HEK293 (cell line): ENCODE measurements at regions of chr6 and their contacts with region 1.

Region 1: DNA sequence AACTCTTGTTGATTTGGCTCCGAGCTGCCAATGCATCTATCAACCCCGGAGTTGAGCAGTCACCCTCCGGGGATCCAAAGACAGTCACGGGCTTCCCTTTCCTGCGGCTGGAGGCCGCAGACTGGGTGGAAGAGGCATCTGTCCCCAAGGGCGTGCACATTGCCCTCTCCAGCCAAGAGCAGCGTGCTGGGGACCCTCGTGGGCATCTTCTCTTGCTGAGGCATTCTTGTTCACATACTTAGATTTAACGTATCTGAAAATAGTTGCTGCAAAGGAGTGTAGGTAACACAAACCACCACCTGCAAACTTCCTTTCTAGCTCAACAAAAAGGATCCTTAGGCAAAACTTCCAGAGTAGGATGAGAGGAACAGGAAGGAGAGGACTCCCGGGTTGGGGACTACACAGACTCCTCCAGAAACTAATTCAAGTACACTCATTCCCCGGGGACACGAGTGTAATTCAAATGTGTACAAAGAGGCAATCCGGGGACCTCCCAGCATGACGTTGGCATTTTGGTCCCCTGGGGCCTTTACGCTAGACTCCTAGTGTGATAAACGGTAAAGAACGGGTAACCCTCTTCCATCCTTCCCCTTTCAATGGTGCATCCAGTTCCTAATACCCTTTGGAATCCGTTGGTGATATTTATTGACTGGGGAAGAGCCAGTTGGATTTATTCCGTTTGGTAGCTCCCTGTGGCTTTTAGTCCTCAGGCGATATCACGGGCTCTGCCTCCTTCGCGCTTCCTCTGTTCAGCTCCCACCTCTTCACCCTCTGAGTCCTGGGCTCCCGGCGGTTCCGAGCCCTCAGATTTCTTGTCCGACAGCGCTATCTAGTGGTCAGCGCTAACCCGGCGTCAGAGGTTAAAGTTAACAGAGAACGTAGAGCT is 2.7 kb upstream of the COL12A1 start:
- H3K4me3 ChIP-seq: no peak overlapping the region
- H3K27ac ChIP-seq: no peak overlapping the region
- H3K4me1 ChIP-seq: peaks cover 12% of the 10 kb centered on the region
- CTCF ChIP-seq: peak; percentile 78

Region 2: DNA sequence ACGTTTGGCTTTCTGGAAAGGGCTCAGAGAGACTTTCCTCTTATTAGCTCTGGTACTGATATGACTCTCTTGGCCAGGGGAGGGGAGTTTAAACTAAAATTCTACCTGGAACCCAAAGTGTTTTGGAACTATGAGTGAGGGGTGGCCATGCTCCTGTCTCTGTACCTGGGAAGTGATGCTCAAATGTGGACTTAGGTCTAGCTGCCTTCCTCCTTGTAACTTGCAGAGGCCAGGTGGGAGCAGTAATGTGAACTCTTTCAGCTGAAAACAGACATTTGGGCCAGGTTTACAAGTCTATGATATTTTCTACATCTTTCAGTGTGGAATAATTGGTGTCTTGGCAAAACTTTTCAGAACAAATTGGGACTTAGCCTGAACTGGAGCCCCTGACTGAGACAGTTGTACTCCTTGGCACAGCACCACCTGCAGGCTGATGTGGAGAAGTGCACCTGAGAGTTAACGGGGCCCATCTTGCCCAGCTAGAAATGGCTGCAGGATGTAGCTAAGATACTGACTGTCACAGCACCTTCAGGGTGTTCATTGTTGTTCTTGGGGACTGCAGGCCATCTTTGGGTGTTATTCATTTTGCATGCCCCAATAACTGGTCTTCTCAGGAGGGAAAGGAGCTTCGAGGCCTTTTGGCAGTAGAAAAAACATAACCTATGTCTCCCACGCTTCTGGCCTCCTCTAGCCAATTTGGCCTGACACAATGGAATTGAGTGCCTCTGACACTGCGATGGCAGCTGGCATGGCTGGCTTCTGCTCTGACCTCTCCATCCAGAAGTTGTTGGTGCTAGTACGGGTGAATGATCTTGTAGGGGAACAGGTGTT is 1475.5 kb before region 1 on chr6:
- CTCF ChIA-PET with region 1: interaction called, 92 read pairs
- POLR2A ChIA-PET with region 1: no interaction called
- H3K4me3 ChIP-seq: no peak overlapping the region
- H3K27ac ChIP-seq: no peak overlapping the region
- H3K4me1 ChIP-seq: no peaks in the 10 kb centered on the region
- CTCF ChIP-seq: peak; percentile 60

Region 3: GRCh38 chr6:73969971-73970970 is 1238.3 kb before region 1 on chr6:
- CTCF ChIA-PET with region 1: interaction called, 31 read pairs
- POLR2A ChIA-PET with region 1: no interaction called
- H3K4me3 ChIP-seq: no peak overlapping the region
- H3K27ac ChIP-seq: no peak overlapping the region
- H3K4me1 ChIP-seq: no peaks in the 10 kb centered on the region
- CTCF ChIP-seq: no peak

Region 4: GRCh38 chr6:74899416-74899815 is 309.1 kb before region 1 on chr6:
- CTCF ChIA-PET with region 1: interaction called, 16 read pairs
- POLR2A ChIA-PET with region 1: no interaction called
- H3K4me3 ChIP-seq: no peak overlapping the region
- H3K27ac ChIP-seq: no peak overlapping the region
- H3K4me1 ChIP-seq: no peaks in the 10 kb centered on the region
- CTCF ChIP-seq: no peak

Region 5: DNA sequence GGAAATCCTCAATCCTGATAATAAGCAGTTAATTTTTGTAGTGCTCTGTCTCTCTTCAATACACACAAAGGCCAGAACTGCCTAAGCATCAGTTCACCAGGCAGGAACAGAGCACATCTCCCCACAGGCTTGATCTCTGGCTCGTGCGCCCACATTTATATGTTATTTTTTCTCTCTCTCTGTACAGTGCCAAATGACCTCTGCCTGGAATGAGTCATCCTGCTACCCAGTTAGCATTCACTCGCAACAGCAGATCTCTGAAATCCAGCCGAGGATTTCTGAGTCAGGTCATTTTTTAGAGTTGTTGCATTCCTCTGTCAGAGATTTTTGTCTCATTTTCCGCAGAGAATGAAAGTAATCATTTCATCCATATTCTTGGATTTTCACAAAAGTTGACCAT is 109.8 kb before region 1 on chr6:
- CTCF ChIA-PET with region 1: interaction called, 14 read pairs
- POLR2A ChIA-PET with region 1: no interaction called
- H3K4me3 ChIP-seq: no peak overlapping the region
- H3K27ac ChIP-seq: no peak overlapping the region
- H3K4me1 ChIP-seq: peaks cover 10% of the 10 kb centered on the region
- CTCF ChIP-seq: no peak

Region 6: DNA sequence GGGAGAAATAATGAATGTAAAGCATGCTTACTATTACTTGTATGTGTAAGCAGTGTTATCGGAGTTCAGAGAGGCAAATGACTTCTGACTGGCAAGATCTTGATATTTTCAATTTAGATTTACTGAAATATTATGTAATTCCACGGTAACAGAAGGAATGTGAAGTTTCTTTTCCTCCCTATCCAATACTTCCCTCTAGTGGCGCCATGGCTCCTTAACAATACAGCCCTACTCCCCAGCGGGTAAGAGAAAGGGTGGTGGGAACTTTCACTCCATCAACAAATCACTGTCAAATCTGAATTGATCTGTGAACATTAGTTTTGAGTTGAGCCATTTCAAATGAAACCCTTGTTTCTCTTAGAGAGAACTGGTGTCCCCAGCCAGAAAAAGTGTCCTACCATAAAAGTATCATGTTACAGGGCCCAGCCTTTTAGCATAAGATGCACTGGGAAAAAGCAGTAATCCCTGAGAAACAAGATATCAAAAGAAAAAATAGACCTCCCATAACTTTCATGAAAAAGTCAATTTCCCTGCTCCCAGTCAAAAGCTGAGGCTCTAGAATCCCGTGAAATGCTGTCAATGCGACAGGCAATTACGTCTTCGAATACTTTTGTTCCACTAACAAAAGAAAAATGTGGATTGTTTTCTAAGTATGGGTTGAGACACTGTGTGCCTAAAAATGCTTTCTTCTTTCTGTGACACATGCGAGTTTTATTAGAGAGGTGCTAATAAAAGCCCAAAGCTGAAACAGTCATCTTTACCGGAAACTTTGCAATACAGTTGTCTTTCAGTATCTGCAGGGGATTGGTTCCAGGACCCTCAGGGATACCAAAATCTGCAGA is 22.2 kb after region 1 on chr6:
- CTCF ChIA-PET with region 1: interaction called, 106 read pairs
- POLR2A ChIA-PET with region 1: no interaction called
- H3K4me3 ChIP-seq: no peak overlapping the region
- H3K27ac ChIP-seq: no peak overlapping the region
- H3K4me1 ChIP-seq: no peaks in the 10 kb centered on the region
- CTCF ChIP-seq: peak; percentile 38; the same call in 1 of the 2 replicates

Region 7: DNA sequence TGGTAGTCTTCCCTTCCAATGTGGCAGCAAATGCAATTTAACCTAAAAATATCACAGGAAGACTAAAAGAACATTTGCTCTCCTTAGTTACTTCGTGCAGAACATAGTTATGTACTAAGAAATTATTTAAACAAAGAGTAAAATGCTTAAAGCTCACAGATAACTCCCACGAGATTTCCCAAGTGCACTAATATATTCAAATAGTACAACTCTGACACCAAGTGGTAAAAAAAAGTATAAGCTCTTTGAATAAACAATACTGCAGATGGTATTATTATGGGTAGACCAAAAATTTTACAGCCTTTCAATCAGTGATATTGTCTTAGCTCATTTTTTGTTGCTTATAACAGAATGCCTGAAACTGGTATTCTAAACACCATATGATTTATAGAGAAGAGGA is 337.8 kb after region 1 on chr6:
- CTCF ChIA-PET with region 1: interaction called, 28 read pairs
- POLR2A ChIA-PET with region 1: no interaction called
- H3K4me3 ChIP-seq: no peak overlapping the region
- H3K27ac ChIP-seq: no peak overlapping the region
- H3K4me1 ChIP-seq: no peaks in the 10 kb centered on the region
- CTCF ChIP-seq: no peak